Heart right ventricle (tissue), 16 donors: ENCODE measurements at regions of chr1 and their contacts with region 1.

Region 1: DNA sequence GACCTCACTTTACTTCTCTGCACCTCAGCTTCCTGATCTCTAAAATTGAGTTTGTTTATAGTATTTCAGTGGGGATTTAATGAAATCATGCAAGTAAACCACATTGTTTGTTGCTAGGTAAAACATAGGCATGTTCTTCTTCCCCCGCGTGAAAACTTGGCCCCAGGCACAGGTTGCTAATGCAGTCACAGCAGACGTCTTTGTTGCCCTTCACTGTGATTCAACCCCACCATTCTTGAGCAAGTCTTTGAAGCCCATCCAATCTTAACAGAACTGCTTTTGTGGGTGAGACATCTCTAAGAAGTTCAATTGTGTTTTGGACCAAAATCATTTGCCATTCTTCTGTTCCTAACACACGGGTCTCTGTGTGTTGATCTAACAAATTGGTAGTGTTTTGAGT is 185.5 kb downstream of the ZNF281 start:
- DNase-seq: no peak
- ATAC-seq: no peak
- H3K4me3 ChIP-seq: no peak overlapping the region
- H3K27ac ChIP-seq: no peak overlapping the region
- H3K4me1 ChIP-seq: peaks cover 0 to 17% (median 0%) of the 10 kb centered on the region in 9 donors
- H3K27me3 ChIP-seq: peaks cover 0 to 17% (median 7%) of the 10 kb centered on the region in 7 donors
- CTCF ChIP-seq: no peak

Region 2: DNA sequence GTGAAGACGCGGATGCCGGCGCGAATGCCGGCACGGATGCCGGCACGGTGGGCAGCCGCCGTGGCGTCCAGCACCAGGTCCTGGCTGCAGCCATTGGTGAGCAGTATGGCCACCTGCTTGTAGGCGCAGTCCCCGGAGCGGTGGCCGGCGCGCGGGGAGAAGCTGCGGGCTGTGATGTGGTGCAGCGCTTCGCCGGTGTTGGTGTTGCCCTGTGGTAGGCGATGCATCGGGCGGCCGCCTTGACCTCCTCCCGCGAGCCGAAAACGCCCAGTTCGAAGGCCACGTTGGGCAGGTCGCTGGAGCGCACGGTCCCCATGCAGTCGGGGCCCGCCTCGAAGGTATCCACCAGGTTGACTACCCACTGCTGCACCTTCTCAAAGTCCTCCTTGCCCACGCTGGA is 76.6 kb before region 1 on chr1:
- intact Hi-C with region 1: loop called in 1 of 10 experiments (anchors 2 kb)
- DNase-seq: no peak
- ATAC-seq: peak in 1 of 8 donors; percentile 17
- H3K4me3 ChIP-seq: no peak overlapping the region
- H3K27ac ChIP-seq: no peak overlapping the region
- H3K4me1 ChIP-seq: peaks cover 0 to 10% (median 0%) of the 10 kb centered on the region in 9 donors
- H3K27me3 ChIP-seq: no peaks in the 10 kb centered on the region
- CTCF ChIP-seq: no peak

Region 3: DNA sequence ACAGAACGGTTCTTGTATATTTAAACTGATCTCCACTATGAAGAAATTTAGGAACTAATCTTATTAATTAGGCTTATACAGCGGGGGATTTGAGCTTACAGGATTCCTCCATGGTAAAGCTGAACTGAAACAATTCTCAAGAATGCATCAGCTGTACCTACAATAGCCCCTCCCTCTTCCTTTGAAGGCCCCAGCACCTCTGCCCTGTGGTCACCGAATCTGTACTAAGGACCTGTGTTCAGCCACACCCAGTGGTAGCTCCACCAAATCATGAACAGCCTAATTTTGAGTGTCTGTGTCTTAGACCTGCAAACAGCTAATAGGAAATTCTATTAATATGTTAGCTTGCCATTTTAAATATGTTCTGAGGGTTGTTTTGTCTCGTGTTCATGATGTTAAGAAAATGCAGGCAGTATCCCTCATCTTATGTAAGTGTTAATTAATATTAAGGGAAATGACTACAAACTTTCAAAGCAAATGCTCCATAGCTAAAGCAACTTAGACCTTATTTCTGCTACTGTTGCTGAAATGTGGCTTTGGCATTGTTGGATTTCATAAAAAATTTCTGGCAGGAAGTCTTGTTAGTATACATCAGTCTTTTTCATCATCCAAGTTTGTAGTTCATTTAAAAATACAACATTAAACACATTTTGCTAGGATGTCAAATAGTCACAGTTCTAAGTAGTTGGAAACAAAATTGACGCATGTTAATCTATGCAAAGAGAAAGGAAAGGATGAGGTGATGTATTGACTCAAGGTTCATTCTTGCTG is 49.6 kb before region 1 on chr1:
- intact Hi-C with region 1: loop called in 1 of 10 experiments (anchors 2 kb)
- DNase-seq: no peak
- ATAC-seq: no peak
- H3K4me3 ChIP-seq: no peak overlapping the region
- H3K27ac ChIP-seq: no peak overlapping the region
- H3K4me1 ChIP-seq: peaks cover 0 to 12% (median 0%) of the 10 kb centered on the region in 9 donors
- H3K27me3 ChIP-seq: peaks cover 0 to under 1% (median 0%) of the 10 kb centered on the region in 7 donors
- CTCF ChIP-seq: no peak